ENCODE measurements at regions of chr6 and their contacts with region 1.

Region 1: GRCh38 chr6:161393839-161394364 is 120.0 kb upstream of the AGPAT4 start:
- DNase-seq: peak; percentile 86
- H3K4me3 ChIP-seq: no peak overlapping the region
- H3K27ac ChIP-seq: no peak overlapping the region
- H3K4me1 ChIP-seq: no peaks in the 10 kb centered on the region
- H3K27me3 ChIP-seq: no peaks in the 10 kb centered on the region
- CTCF ChIP-seq: peak; percentile 65

Region 2: GRCh38 chr6:161618831-161619454 is 225.0 kb after region 1 on chr6:
- CTCF ChIA-PET with region 1: no interaction called
- POLR2A ChIA-PET with region 1: no interaction called
- intact Hi-C with region 1: loop called (anchors 10 kb)
- DNase-seq: peak; percentile 74
- H3K4me3 ChIP-seq: peak overlapping the region; percentile 17
- H3K27ac ChIP-seq: no peak overlapping the region
- H3K4me1 ChIP-seq: no peaks in the 10 kb centered on the region
- H3K27me3 ChIP-seq: peaks cover 7% of the 10 kb centered on the region
- CTCF ChIP-seq: peak; percentile 69

Measured in A673 (cell line).